Left cardiac atrium (tissue), 4 donors: ENCODE measurements at regions of chr4 and their contacts with region 1.

Region 1: GRCh38 chr4:153750197-153750817 is 9.5 kb downstream of the RNF175 start:
- DNase-seq: peak; percentile 33
- ATAC-seq: peak; percentile 80 to 81

Region 2: DNA sequence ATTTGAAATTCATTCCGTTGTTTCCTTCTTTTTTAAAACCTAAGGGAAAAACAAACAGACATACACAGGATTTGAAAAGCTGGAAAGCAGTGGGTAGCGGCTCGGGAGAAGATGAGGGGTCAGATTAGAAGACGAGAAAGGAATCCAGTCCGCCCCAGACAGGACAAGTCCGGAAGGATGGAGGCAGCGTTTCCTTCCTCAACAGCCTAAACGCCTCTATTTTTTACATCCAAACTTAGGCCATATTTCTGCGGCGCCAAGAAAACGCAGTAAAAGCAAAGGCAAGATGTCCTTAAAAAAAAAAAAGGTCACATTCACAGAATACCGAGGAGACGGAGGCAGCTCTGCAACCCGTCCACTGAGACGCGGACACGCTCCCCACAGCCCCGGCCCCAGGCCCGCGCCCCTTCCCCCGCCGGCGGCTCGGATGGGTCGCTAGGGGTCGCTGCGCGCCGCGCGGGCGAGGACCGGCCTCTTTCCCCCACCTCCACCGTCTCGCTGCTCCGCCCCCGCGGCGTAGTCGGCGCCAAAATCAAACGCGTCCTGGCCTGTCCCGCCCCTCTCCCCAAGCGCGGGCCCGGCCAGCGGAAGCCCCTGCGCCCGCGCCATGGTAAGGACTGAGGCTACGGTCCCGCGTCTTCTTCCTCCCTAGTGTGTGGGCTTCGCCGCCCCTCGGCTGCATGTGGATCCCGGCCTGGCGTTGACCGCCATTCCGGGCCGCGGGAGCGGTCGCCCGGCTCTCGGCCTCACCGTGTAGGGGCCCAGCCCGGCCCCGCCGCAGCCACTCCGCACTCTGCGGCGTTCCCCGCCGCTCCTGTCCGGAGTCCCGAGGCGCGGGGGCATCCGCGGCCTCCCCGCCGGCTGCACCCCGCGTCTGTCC is 405.9 kb before region 1 on chr4 and contains the start of gene MND1:
- intact Hi-C with region 1: loop called in 1 of 2 experiments (anchors 5 kb)
- DNase-seq: peak; percentile 87
- ATAC-seq: peak; percentile 97
- total RNA-seq, gene MND1: 0.62 TPM in 1 of 2 donors, not detected in the other

Region 3: DNA sequence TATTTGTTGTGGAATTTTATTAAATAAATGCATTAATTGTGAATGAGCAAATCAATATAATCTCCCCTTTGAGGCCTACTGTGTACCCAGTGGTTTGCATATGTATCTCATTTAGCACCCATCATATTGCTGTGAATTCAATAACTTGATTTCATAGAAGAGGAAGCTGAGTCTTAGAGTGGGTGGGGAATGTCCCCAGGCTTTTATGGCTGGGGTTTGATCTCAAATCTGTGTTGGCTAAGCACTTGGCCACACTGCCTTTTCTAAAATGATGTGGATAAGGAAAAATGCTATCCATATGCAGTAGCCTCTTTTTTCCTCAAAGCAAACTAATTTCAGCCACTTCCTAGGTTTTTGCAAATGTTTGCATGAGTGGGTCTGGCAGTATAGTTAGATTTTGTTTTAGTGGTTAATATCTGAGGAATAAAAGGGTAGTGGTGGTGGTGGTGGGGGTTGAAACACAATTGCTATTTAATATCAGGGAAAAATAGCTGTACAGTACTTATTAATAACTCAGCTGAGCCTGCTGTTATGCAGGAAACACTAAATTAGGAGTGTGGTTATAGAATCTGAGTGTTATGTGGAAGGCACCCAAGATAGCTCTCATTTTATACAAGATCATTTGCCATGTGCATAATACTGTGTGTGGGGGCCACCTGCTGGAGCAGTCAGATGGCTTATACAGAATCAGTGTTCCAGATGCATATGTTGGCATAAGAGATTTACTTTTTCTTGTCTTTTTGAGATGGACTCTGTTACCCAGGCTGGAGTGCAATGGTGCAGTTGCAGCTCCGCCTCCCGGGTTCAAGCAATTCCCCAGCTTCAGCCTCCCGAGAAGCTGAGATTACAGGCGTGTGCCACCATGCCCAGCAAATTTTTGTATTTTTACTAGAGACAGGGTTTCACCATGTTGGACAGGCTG is 176.2 kb before region 1 on chr4:
- intact Hi-C with region 1: no loop called
- DNase-seq: peak; percentile 63
- ATAC-seq: peak; percentile 87 to 92

Region 4: GRCh38 chr4:153634738-153635353 is 115.5 kb before region 1 on chr4:
- intact Hi-C with region 1: loop called (anchors 5 kb)
- DNase-seq: no peak
- ATAC-seq: peak; percentile 52 to 64

Region 5: DNA sequence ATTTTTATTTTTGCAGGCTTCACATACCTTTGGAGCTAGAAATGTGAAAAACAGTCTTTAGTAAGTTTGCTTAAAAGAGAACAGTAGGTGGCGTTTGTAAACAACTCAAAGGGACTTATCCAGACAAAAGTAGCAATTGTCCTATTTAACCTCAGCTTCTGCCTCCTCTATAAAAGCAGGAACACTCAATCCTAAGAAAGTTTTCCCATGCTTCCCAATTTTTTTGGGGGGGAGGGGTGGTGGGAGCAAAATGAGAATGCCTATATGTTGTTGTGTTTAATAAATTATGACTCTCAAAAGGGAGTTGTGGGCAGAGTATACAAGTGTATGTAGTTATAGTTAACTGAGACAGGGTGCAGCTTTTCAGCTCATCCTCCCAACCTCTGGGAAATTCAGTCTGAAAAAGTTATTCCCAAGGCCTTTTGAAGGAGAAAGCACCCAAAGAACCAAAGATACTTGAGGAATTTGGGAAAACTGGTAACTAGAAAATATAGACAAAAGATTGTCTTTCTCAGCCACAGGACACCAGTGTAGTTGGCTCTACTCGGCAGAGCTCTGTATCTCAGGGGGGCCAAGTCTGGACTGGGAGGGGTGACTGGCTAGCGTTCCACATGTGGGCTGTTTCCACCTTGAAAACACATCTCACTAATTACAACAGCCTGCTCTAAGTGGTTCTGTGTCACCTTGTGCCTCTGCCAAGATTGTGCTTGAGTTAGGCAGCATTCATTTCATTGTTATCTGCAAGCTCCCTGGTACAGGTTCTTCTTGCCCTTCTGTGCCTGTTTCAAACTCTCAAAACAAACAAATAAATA is 35.8 kb after region 1 on chr4:
- intact Hi-C with region 1: no loop called
- DNase-seq: no peak
- ATAC-seq: no peak

Region 6: GRCh38 chr4:153890761-153891160 is 140.5 kb after region 1 on chr4:
- intact Hi-C with region 1: no loop called
- DNase-seq: no peak
- ATAC-seq: no peak